KBM-7 (cell line): ENCODE measurements at regions of chr16 and their contacts with region 1.

Region 1: GRCh38 chr16:22190776-22191531 is 15.1 kb upstream of the EEF2K start:
- DNase-seq: peak; percentile 94

Region 2: DNA sequence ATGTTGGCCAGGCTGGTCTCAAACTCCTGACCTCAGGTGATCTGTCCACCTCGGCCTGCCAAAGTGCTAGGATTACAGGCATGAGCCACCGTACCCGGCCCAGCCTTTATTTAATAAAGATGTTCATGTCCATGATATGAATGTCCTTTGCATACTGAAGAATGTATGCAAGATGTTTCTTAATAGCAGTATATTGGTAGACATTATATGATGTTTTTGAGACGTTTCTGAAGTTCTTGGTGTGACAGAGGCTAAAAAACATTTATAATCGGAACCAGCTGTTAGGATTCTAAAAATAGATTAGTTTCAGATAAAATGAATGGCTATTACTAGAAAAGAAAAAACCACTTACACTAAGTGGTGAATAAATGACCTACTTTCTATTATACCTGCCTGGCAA is 201.8 kb before region 1 on chr16:
- in situ Hi-C with region 1: loop called (anchors 25 kb)
- DNase-seq: no peak

Region 3: DNA sequence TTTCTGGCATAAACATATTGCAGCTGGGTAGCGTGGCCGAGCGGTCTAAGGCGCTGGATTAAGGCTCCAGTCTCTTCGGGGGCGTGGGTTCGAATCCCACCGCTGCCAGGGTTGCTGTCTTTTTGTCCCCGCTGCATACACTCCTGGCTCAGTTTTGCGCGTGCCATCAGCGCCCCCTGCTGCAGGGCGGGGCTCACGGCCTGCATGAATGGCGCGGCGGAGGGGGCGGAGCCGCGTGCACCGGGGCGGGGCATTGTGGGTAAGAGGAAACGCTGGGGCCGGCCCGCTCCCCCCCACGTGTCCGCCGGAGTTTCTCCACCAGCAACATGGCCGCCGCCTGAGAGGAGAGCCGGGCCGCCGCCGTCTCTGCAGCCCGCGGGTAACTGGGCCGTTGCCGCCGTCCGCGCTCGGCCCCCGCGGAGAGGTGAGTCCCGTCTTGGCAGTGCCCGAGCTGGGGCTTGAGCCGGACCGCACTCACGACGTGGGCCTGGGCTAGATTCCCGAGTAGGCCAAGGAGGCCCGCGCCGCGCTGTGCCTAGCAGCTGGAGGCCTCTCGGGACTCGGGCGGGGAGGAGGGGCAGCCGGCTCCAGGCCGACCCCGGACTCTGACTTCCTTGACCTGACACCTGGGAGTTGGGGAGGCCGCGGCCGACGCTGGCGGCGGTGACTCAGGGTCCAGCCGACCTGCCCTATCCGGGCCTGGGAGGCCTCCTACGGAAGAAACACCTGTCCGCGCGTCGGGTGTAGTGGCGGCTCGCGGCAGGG is 106.3 kb after region 1 on chr16 and contains the start of gene POLR3E:
- in situ Hi-C with region 1: loop called (anchors 5 kb)
- DNase-seq: peak; percentile 99